ENCODE measurements at regions of chr15 and their contacts with region 1.

Region 1: DNA sequence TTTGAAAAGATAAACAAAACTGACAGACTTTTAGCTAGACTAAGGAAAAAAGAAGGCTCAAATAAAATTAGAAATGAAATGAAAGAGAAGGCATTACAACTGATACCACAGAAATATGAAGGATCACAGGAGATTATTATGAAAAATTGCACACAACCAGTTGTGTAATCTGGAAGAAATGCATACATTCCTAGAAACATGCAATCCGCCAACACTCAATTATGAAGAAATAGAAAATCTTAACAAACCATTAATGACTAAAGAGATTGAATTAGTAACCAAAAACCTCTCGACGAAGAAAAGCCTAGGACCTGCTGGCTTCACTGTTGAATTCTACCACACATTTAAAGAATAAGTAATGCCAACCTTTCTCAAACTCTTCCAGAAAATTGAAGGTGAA is 149.5 kb downstream of the SV2B start:
- H3K4me3 ChIP-seq: no peak overlapping the region
- H3K27ac ChIP-seq: no peak overlapping the region
- H3K4me1 ChIP-seq: no peaks in the 10 kb centered on the region
- CTCF ChIP-seq: no peak

Region 2: GRCh38 chr15:90915808-90916440 is 333.7 kb before region 1 on chr15:
- CTCF ChIA-PET with region 1: no interaction called
- POLR2A ChIA-PET with region 1: no interaction called
- H3K4me3 ChIP-seq: no peak overlapping the region
- H3K27ac ChIP-seq: no peak overlapping the region
- H3K4me1 ChIP-seq: no peaks in the 10 kb centered on the region
- CTCF ChIP-seq: no peak

Region 3: GRCh38 chr15:91214675-91215590 is 34.7 kb before region 1 on chr15:
- CTCF ChIA-PET with region 1: interaction called, 17 read pairs
- POLR2A ChIA-PET with region 1: no interaction called
- H3K4me3 ChIP-seq: no peak overlapping the region
- H3K27ac ChIP-seq: no peak overlapping the region
- H3K4me1 ChIP-seq: no peaks in the 10 kb centered on the region; the same call in 1 of the 2 replicates
- CTCF ChIP-seq: no peak

Region 4: GRCh38 chr15:91224755-91225380 is 24.7 kb before region 1 on chr15:
- CTCF ChIA-PET with region 1: interaction called, 23 read pairs
- POLR2A ChIA-PET with region 1: no interaction called
- H3K4me3 ChIP-seq: no peak overlapping the region
- H3K27ac ChIP-seq: no peak overlapping the region
- H3K4me1 ChIP-seq: no peaks in the 10 kb centered on the region
- CTCF ChIP-seq: peak; percentile 44; the same call in 1 of the 2 replicates

Region 5: GRCh38 chr15:91231703-91232372 is 17.8 kb before region 1 on chr15:
- CTCF ChIA-PET with region 1: interaction called, 62 read pairs
- POLR2A ChIA-PET with region 1: no interaction called
- H3K4me3 ChIP-seq: no peak overlapping the region
- H3K27ac ChIP-seq: no peak overlapping the region
- H3K4me1 ChIP-seq: no peaks in the 10 kb centered on the region
- CTCF ChIP-seq: no peak

Region 6: GRCh38 chr15:91238644-91239425 is 10.8 kb before region 1 on chr15:
- CTCF ChIA-PET with region 1: interaction called, 62 read pairs
- POLR2A ChIA-PET with region 1: no interaction called
- H3K4me3 ChIP-seq: no peak overlapping the region
- H3K27ac ChIP-seq: no peak overlapping the region
- H3K4me1 ChIP-seq: no peaks in the 10 kb centered on the region
- CTCF ChIP-seq: no peak

Region 7: GRCh38 chr15:91263996-91264531 is 14.5 kb after region 1 on chr15:
- CTCF ChIA-PET with region 1: interaction called, 95 read pairs
- POLR2A ChIA-PET with region 1: no interaction called
- H3K4me3 ChIP-seq: no peak overlapping the region
- H3K27ac ChIP-seq: no peak overlapping the region
- H3K4me1 ChIP-seq: no peaks in the 10 kb centered on the region
- CTCF ChIP-seq: no peak

Region 8: GRCh38 chr15:91271565-91272153 is 22.1 kb after region 1 on chr15:
- CTCF ChIA-PET with region 1: interaction called, 30 read pairs
- POLR2A ChIA-PET with region 1: no interaction called
- H3K4me3 ChIP-seq: no peak overlapping the region
- H3K27ac ChIP-seq: no peak overlapping the region
- H3K4me1 ChIP-seq: no peaks in the 10 kb centered on the region
- CTCF ChIP-seq: peak; percentile 63

Measured in HEK293 (cell line).